ENCODE measurements at regions of chr2 and their contacts with region 1.

Region 1: DNA sequence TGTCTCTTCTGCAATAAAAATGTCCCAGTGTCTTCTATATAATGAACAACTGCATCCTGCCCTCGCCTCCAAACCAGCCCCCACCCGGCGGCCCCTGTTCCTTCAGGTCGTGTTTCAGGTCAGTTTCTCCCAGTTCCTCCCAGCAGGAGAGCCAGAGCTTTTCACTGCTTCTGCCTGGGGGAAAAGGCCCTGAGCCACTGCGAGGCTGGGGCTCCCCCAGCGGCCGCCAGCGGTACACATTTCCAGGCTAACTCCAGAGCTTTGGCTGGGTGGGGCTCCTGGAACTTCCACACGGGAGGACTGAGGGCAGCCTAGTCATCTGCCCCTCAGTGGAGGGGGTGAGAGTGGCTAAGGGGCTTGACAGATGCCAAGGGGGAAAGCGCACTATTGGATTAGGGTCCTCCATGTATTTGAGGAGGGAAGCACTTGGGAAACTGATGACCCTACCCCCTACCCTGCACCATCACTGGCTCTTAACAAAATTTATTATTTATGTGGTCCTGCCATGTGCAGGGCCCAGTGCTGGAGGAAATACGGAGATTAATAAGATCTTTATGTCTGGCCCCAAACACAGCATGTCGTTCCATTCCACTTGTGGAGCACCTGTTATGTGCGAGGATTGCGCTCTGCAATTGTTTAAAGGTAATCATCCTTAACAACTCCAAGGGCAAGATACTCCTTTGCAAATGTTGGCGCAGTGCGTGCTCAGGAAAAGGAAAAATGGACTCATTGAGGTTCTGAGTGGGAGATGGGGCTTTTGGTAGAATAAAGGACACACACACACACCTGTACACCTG is 17.3 kb upstream of the CYS1 start:
- DNase-seq: peak; percentile 86
- H3K4me3 ChIP-seq: no peak overlapping the region
- H3K27ac ChIP-seq: no peak overlapping the region
- H3K4me1 ChIP-seq: peaks cover 0 to 10% (median 4%) of the 10 kb centered on the region in 4 donors
- H3K27me3 ChIP-seq: peaks cover 0 to 5% (median 0%) of the 10 kb centered on the region in 3 donors
- CTCF ChIP-seq: peak; percentile 90 to 95 (median 92)
- EP300 ChIP-seq: no peak
- POLR2A ChIP-seq: no peak

Region 2: GRCh38 chr2:9813312-9814133 is 284.0 kb before region 1 on chr2:
- intact Hi-C with region 1: loop called (anchors 5 kb)
- DNase-seq: peak; percentile 87
- H3K4me3 ChIP-seq: peak overlapping the region in 2 of 4 donors; percentile 20 to 30
- H3K27ac ChIP-seq: no peak overlapping the region
- H3K4me1 ChIP-seq: peaks cover 0 to 10% (median 9%) of the 10 kb centered on the region in 4 donors
- H3K27me3 ChIP-seq: no peaks in the 10 kb centered on the region
- CTCF ChIP-seq: peak; percentile 72 to 90 (median 82)
- EP300 ChIP-seq: no peak
- POLR2A ChIP-seq: no peak

Region 3: GRCh38 chr2:10072656-10073480 is 24.7 kb before region 1 on chr2:
- intact Hi-C with region 1: loop called (anchors 1 kb)
- DNase-seq: peak; percentile 94
- H3K4me3 ChIP-seq: no peak overlapping the region
- H3K27ac ChIP-seq: no peak overlapping the region
- H3K4me1 ChIP-seq: peaks cover 0 to 19% (median 6%) of the 10 kb centered on the region in 4 donors
- H3K27me3 ChIP-seq: no peaks in the 10 kb centered on the region
- CTCF ChIP-seq: peak; percentile 75 to 86 (median 84)
- EP300 ChIP-seq: no peak
- POLR2A ChIP-seq: no peak

Measured in sigmoid colon (tissue), 7 donors.